Activated B cell treated with CpG ODN at 0.5 μM for 24 hours (primary cell): ENCODE measurements at regions of chr14 and their contacts with region 1.

Region 1: DNA sequence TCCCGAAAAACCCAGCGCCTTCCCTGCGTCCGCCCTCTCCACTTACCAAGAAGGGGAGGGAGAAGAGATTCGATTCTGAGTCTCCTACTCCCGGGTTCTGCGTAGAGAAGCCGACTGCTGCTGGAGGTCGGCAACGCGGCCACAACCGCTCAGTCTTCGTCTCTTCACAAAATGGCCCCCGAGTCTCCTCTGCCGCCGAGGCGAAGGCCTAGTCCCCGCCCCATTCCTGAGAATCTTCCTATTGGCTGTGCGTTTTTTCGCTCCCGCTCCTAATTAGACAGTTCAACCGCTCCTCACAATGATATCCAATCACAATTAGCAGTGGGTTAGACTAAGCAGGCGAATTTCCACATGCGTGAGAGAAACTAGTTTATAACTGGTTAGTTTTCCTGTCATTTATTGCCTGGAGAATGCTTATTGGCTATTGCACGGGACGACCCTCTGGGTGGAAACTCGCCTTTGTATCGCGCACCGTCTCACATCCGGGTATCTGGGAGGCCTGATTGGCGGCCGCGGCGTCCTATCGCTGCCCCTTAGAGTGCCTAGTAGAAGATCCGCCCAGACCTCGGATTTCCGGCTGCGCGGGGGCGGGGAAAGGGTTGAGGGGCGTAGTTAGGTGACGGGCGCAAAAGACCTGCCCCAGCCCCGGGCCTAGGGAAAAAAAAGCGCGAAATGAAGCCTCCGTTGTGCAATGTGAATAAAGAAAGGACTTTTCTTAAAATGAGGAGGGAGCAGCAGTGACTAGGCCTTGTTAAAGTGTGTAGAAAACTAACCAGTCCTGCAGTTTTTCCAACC is at the start of gene HNRNPC:
- DNase-seq: peak; percentile 100
- ATAC-seq: peak; percentile 87
- H3K4me3 Mint-ChIP-seq: peak within 1 kb of the TSS; percentile 100
- H3K27ac Mint-ChIP-seq: peak within 1 kb of the TSS; percentile 100
- H3K4me1 Mint-ChIP-seq: peaks cover 48% of the 10 kb centered on the region
- H3K27me3 Mint-ChIP-seq: no peaks in the 10 kb centered on the region
- CTCF ChIP-seq: no peak
- total RNA-seq, gene HNRNPC: 653 and 683 TPM in 2 replicates

Region 2: GRCh38 chr14:21215130-21215878 is 54.1 kb before region 1 on chr14:
- CTCF ChIA-PET with region 1: no interaction called
- POLR2A ChIA-PET with region 1: no interaction called
- intact Hi-C with region 1: loop called (anchors 10 kb)
- DNase-seq: no peak
- ATAC-seq: no peak
- H3K4me3 Mint-ChIP-seq: no peak overlapping the region
- H3K27ac Mint-ChIP-seq: peak overlapping the region; percentile 44
- H3K4me1 Mint-ChIP-seq: peaks cover 36% of the 10 kb centered on the region
- H3K27me3 Mint-ChIP-seq: no peaks in the 10 kb centered on the region
- CTCF ChIP-seq: no peak

Region 3: GRCh38 chr14:21308479-21309237 is 39.2 kb after region 1 on chr14:
- CTCF ChIA-PET with region 1: no interaction called
- POLR2A ChIA-PET with region 1: interaction called, 31 read pairs
- intact Hi-C with region 1: loop called (anchors 1 kb)
- DNase-seq: peak; percentile 51
- ATAC-seq: peak; percentile 85
- H3K4me3 Mint-ChIP-seq: peak overlapping the region; percentile 87
- H3K27ac Mint-ChIP-seq: peak overlapping the region; percentile 93
- H3K4me1 Mint-ChIP-seq: peaks cover 26% of the 10 kb centered on the region
- H3K27me3 Mint-ChIP-seq: no peaks in the 10 kb centered on the region
- CTCF ChIP-seq: no peak

Region 4: GRCh38 chr14:21367582-21368144 is 98.2 kb after region 1 on chr14:
- CTCF ChIA-PET with region 1: no interaction called
- POLR2A ChIA-PET with region 1: no interaction called
- intact Hi-C with region 1: no loop called
- DNase-seq: no peak
- ATAC-seq: no peak
- H3K4me3 Mint-ChIP-seq: no peak overlapping the region
- H3K27ac Mint-ChIP-seq: no peak overlapping the region
- H3K4me1 Mint-ChIP-seq: peaks cover 3% of the 10 kb centered on the region
- H3K27me3 Mint-ChIP-seq: no peaks in the 10 kb centered on the region
- CTCF ChIP-seq: no peak

Region 5: DNA sequence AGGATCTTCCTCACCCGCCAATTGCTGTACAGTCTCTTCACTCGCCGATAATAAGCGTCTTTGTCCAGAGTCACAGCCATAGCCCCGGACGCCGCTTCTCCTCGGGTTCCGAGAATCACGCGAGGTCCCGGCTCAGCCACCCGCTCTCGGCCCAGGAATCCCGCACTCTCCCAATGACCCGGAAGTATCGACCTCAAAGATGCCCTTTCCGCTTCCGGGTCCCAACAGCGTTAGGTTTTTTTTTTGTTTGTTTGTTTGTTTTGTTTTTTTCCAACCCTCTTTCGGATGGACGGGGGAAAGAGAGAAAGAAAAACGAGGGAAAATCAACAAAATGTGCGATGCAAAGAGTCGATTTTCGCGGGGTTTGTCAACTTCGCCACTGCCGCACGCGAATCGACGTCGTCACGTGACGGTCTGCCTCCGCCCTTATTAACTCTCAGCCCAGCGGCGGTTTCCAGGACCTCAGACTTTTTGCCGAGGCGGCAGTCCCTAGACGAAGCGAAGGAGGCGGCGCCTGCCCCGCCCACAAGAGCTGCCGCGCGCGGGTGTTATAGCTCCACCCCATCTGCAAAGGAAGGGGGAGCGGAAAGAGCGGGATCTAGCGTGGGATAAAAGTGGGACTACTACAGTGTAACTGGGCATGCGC is 114.5 kb after region 1 on chr14 and contains the start of gene SUPT16H:
- CTCF ChIA-PET with region 1: no interaction called
- POLR2A ChIA-PET with region 1: interaction called, 14 read pairs
- intact Hi-C with region 1: loop called (anchors 1 kb)
- DNase-seq: peak; percentile 87
- ATAC-seq: peak; percentile 91
- H3K4me3 Mint-ChIP-seq: peak within 1 kb of the TSS; percentile 96
- H3K27ac Mint-ChIP-seq: peak within 1 kb of the TSS; percentile 99
- H3K4me1 Mint-ChIP-seq: peaks cover 40% of the 10 kb centered on the region
- H3K27me3 Mint-ChIP-seq: no peaks in the 10 kb centered on the region
- CTCF ChIP-seq: no peak
- total RNA-seq, gene SUPT16H: 100 and 102 TPM in 2 replicates

Region 6: GRCh38 chr14:21455911-21456667 is 186.6 kb after region 1 on chr14 and contains the start of gene CHD8:
- CTCF ChIA-PET with region 1: no interaction called
- POLR2A ChIA-PET with region 1: interaction called, 4 read pairs
- intact Hi-C with region 1: loop called (anchors 1 kb)
- DNase-seq: peak; percentile 91
- ATAC-seq: peak; percentile 97
- H3K4me3 Mint-ChIP-seq: peak within 1 kb of the TSS; percentile 98
- H3K27ac Mint-ChIP-seq: peak within 1 kb of the TSS; percentile 99
- H3K4me1 Mint-ChIP-seq: peaks cover 34% of the 10 kb centered on the region
- H3K27me3 Mint-ChIP-seq: no peaks in the 10 kb centered on the region
- CTCF ChIP-seq: no peak
- total RNA-seq, gene CHD8: 113 and 133 TPM in 2 replicates